A549 (cell line): ENCODE measurements at regions of chrX and their contacts with region 1.

Region 1: DNA sequence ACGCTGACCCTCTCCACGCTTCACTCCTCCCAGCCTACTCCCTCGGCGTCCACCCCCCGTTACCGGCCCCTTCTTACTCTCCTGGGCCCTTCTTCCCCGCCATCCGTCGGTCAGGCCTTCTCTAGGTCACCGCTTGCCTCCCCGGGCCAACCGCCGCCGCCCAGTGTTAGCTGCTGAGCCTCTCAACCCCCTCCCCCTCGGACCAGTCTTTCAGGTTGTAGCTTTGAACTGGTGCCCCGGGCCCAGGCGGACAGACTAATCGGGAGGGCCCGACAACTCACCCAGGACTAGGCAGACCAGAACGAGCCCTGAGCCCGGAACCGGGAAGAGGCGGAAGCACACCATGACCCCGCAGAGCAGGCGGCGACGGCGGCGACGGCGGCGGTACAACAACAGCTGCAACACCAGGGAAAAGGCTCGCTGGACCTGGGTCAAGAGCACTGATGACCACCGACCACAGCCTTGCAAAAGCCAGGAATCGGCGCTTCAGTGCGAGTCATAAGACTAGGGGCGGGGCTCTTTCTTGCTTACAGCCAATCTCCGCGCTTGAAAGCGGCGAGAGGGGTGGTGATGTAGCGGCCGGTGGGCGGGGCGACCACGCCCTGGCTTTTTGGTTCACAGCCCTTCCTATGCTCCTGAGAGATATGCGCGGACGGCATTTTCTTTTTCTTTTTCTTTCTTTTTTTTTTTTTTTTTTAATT is at the start of gene LAMP2:
- DNase-seq: peak; percentile 79 to 88
- ATAC-seq: peak; percentile 97
- H3K4me3 ChIP-seq: peak within 1 kb of the TSS; percentile 86
- H3K27ac ChIP-seq: peak within 1 kb of the TSS; percentile 75 to 99
- H3K4me1 ChIP-seq: peaks cover 15% of the 10 kb centered on the region; the same call in 2 of the 3 replicates
- CTCF ChIP-seq: no peak
- EP300 ChIP-seq: no peak
- POLR2A ChIP-seq: peak; percentile 83
- RAD21 ChIP-seq: no peak
- polyA plus RNA-seq, gene LAMP2: 76.9 and 95.1 TPM in 2 replicates

Region 2: DNA sequence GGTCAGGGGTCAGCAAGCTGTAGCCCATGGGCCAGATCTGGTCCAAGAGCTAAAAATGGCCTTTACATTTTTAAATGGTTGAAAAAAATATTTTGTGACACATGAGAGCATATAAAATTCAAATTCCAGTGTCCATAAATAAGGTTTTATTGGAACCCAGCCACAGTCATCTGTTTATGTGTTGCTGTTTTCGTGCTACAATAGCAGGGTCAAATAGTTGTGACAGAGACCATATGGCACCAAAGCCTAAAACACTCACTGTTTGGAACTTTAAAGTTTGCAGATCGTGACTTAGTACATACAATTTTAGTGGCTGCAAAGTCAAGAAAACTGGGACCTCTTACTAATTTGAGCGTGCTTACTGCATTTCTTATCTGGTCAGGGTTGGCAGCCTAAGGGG is 29.1 kb before region 1 on chrX:
- CTCF ChIA-PET with region 1: no interaction called
- POLR2A ChIA-PET with region 1: no interaction called
- DNase-seq: no peak
- ATAC-seq: no peak
- H3K4me3 ChIP-seq: no peak overlapping the region
- H3K27ac ChIP-seq: no peak overlapping the region
- H3K4me1 ChIP-seq: no peaks in the 10 kb centered on the region
- CTCF ChIP-seq: no peak
- EP300 ChIP-seq: no peak
- POLR2A ChIP-seq: no peak
- RAD21 ChIP-seq: no peak

Region 3: GRCh38 chrX:120452131-120452530 is 16.8 kb before region 1 on chrX:
- CTCF ChIA-PET with region 1: interaction called, 13 read pairs
- POLR2A ChIA-PET with region 1: no interaction called
- DNase-seq: peak; percentile 8 to 22
- ATAC-seq: peak; percentile 54 to 70; a peak in 4 of 6 replicates
- H3K4me3 ChIP-seq: no peak overlapping the region
- H3K27ac ChIP-seq: no peak overlapping the region
- H3K4me1 ChIP-seq: no peaks in the 10 kb centered on the region
- CTCF ChIP-seq: peak; percentile 23; the same call in 2 of the 3 replicates
- EP300 ChIP-seq: no peak
- POLR2A ChIP-seq: no peak
- RAD21 ChIP-seq: no peak

Region 4: DNA sequence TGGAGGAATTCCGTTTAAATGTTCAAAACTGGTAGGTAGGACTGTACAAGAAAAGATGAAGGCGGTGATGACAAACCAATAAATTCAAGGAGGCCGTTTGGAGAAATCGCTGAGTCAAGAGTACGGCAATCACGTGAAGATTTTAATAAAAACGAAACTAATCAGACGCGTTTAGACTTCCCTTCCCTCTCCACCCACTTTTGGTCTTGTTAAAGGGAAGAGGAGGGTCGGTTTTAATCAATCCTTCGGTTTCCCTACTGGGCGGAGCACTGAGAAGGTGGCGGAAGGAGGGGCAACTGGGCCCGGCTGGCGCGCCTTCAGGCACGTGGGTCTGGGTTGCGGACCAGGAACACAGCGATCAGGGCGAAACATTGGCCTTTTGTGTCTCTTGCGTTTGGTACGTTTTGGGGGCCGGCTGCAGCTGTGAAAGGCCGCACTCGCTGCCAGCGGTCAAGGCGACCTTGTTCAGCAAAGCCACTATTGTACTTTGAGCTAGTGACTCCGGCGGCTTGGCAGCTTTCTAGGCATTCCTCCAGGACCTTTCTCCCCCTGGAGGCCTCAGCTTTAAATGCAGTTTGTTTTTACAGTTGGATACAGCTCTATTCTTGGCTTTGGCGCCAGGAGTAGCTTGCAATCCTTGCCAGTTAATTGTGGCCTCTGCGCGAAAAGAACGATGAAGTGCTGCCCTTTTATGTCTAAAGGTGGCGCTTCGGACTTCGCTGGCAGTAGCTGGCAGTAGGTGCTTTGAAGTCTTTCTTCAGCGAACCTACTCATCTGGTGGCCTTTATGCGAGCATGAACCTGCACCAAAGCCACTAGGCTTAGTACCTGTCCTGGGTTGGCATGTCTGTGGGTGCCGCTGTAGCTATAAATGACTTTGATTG is 16.9 kb after region 1 on chrX:
- CTCF ChIA-PET with region 1: interaction called, 3 read pairs
- POLR2A ChIA-PET with region 1: interaction called, 10 read pairs
- DNase-seq: peak; percentile 70 to 92
- ATAC-seq: peak; percentile 96 to 97
- H3K4me3 ChIP-seq: peak overlapping the region; percentile 42
- H3K27ac ChIP-seq: peak overlapping the region; percentile 84 to 89
- H3K4me1 ChIP-seq: peaks cover 7% of the 10 kb centered on the region; the same call in 1 of the 3 replicates
- CTCF ChIP-seq: no peak; the same call in none of the 3 replicates
- EP300 ChIP-seq: no peak
- POLR2A ChIP-seq: peak; percentile 39
- RAD21 ChIP-seq: peak in 1 of 2 experiments; percentile 27; a peak in 2 of 5 replicates